ENCODE measurements at regions of chr11 and their contacts with region 1.

Region 1: GRCh38 chr11:62427630-62428233 is 8.9 kb downstream of the SCGB1A1 start:
- DNase-seq: no peak
- ATAC-seq: peak in 1 of 4 experiments; percentile 17
- H3K4me3 ChIP-seq: no peak overlapping the region
- H3K4me3 Mint-ChIP-seq: peak overlapping the region; percentile 8 to 60 (median 21)
- H3K27ac ChIP-seq: peak overlapping the region; percentile 16
- H3K27ac Mint-ChIP-seq: peak overlapping the region; percentile 55 to 91
- H3K4me1 ChIP-seq: peaks cover 16 to 24% of the 10 kb centered on the region in 2 experiments
- H3K4me1 Mint-ChIP-seq: peaks cover 30 to 67% (median 49%) of the 10 kb centered on the region in 3 donors
- H3K27me3 ChIP-seq: peaks cover 0 to 5% of the 10 kb centered on the region in 2 experiments
- H3K27me3 Mint-ChIP-seq: no peaks in the 10 kb centered on the region

Region 2: GRCh38 chr11:62387381-62387780 is 40.4 kb before region 1 on chr11:
- CTCF ChIA-PET with region 1: no interaction called
- POLR2A ChIA-PET with region 1: no interaction called
- DNase-seq: no peak
- ATAC-seq: no peak
- H3K4me3 ChIP-seq: no peak overlapping the region
- H3K4me3 Mint-ChIP-seq: no peak overlapping the region
- H3K27ac ChIP-seq: no peak overlapping the region
- H3K27ac Mint-ChIP-seq: peak overlapping the region in 1 of 2 donors; percentile 8
- H3K4me1 ChIP-seq: peaks cover 2 to 12% of the 10 kb centered on the region in 2 experiments
- H3K4me1 Mint-ChIP-seq: peaks cover 8 to 12% (median 10%) of the 10 kb centered on the region in 3 donors
- H3K27me3 ChIP-seq: peaks cover 0 to 7% of the 10 kb centered on the region in 2 experiments
- H3K27me3 Mint-ChIP-seq: no peaks in the 10 kb centered on the region

Region 3: GRCh38 chr11:62406034-62406433 is 21.7 kb before region 1 on chr11:
- CTCF ChIA-PET with region 1: interaction called in 1 of 2 experiments, 8 read pairs
- POLR2A ChIA-PET with region 1: interaction called in 1 of 2 experiments, 16 read pairs
- DNase-seq: no peak
- ATAC-seq: no peak
- H3K4me3 ChIP-seq: no peak overlapping the region
- H3K4me3 Mint-ChIP-seq: no peak overlapping the region
- H3K27ac ChIP-seq: no peak overlapping the region
- H3K27ac Mint-ChIP-seq: no peak overlapping the region
- H3K4me1 ChIP-seq: peaks cover 10 to 23% of the 10 kb centered on the region in 2 experiments
- H3K4me1 Mint-ChIP-seq: peaks cover 21 to 24% (median 24%) of the 10 kb centered on the region in 3 donors
- H3K27me3 ChIP-seq: peaks cover 0 to 2% of the 10 kb centered on the region in 2 experiments
- H3K27me3 Mint-ChIP-seq: no peaks in the 10 kb centered on the region

Region 4: GRCh38 chr11:62542750-62543567 is 115.2 kb after region 1 on chr11:
- CTCF ChIA-PET with region 1: interaction called, 9 to 27 read pairs
- POLR2A ChIA-PET with region 1: interaction called in 1 of 2 experiments, 3 read pairs
- DNase-seq: peak; percentile 39 to 81 (median 62)
- ATAC-seq: peak; percentile 36 to 59 (median 42)
- H3K4me3 ChIP-seq: peak overlapping the region in 1 of 2 donors; percentile 95
- H3K4me3 Mint-ChIP-seq: peak overlapping the region; percentile 91 to 96 (median 92)
- H3K27ac ChIP-seq: peak overlapping the region; percentile 95
- H3K27ac Mint-ChIP-seq: peak overlapping the region; percentile 84 to 85
- H3K4me1 ChIP-seq: peaks cover 14 to 92% of the 10 kb centered on the region in 2 experiments
- H3K4me1 Mint-ChIP-seq: peaks cover 65 to 77% (median 75%) of the 10 kb centered on the region in 3 donors
- H3K27me3 ChIP-seq: no peaks in the 10 kb centered on the region
- H3K27me3 Mint-ChIP-seq: no peaks in the 10 kb centered on the region

Region 5: GRCh38 chr11:62556108-62556871 is 128.6 kb after region 1 on chr11:
- CTCF ChIA-PET with region 1: interaction called, 11 to 27 read pairs
- POLR2A ChIA-PET with region 1: interaction called, 3 to 11 read pairs
- DNase-seq: peak; percentile 65 to 91 (median 80)
- ATAC-seq: peak; percentile 53 to 79 (median 76)
- H3K4me3 ChIP-seq: peak overlapping the region in 1 of 2 donors; percentile 37
- H3K4me3 Mint-ChIP-seq: peak overlapping the region; percentile 71 to 82 (median 77)
- H3K27ac ChIP-seq: peak overlapping the region; percentile 98
- H3K27ac Mint-ChIP-seq: peak overlapping the region; percentile 97 to 99
- H3K4me1 ChIP-seq: peaks cover 51 to 97% of the 10 kb centered on the region in 2 experiments
- H3K4me1 Mint-ChIP-seq: peaks cover 90 to 96% (median 91%) of the 10 kb centered on the region in 3 donors
- H3K27me3 ChIP-seq: no peaks in the 10 kb centered on the region
- H3K27me3 Mint-ChIP-seq: no peaks in the 10 kb centered on the region

Measured in T-cell (primary cell).